HEK293 (cell line): ENCODE measurements at regions of chrX and their contacts with region 1.

Region 1: GRCh38 chrX:47836164-47837072 is at the start of gene ZNF81:
- H3K4me3 ChIP-seq: peak within 1 kb of the TSS; percentile 69
- H3K27ac ChIP-seq: no peak within 1 kb of the TSS
- H3K4me1 ChIP-seq: no peaks in the 10 kb centered on the region
- CTCF ChIP-seq: no peak

Region 2: DNA sequence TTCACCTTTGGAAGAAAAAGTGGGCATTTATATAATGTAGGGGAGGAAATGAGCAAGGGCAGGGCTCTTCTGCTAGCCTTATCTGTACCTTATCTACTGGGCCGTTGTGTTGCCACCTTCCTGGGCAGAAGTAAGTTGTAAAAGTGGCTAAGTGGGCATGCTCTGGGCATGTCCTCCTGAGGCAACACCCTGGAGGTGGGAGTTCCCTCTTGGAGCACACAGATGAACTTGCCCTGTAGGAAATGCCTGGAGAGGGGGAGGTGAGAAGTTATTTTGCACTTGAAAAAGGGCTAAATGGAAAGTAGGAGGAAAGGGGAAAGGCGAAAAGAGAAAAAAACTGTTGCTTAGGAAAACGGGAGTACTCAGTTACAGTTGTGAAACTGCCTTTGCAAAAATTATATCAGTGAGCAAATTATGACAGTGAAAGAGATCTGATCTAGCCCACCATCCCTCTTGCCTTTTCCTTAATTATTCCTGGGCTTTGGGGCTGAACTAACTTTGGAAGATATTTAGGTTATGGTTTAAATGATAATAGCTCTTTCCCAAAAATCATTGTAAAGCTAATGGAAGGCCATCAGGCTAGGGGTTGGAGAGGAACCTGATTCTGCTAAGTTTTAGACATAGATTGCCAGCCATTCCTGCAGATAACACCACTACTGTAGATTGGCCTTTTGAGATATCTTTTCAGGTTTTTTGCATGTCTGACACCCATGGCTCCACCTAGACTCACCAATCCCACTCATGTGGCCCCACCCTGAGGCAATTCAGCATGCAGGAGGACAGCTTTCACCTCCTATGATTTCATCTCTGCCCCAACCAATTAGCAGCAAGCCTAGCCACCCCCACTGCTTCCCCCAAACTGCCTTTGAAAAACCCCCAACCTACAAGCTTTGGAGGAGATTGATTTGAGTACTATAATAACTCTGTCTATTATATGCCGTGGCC is 20.2 kb before region 1 on chrX:
- CTCF ChIA-PET with region 1: interaction called, 16 read pairs
- POLR2A ChIA-PET with region 1: no interaction called
- H3K4me3 ChIP-seq: no peak overlapping the region
- H3K27ac ChIP-seq: no peak overlapping the region
- H3K4me1 ChIP-seq: no peaks in the 10 kb centered on the region
- CTCF ChIP-seq: no peak

Region 3: GRCh38 chrX:47863187-47863586 is 26.8 kb after region 1 on chrX:
- CTCF ChIA-PET with region 1: no interaction called
- POLR2A ChIA-PET with region 1: no interaction called
- H3K4me3 ChIP-seq: no peak overlapping the region
- H3K27ac ChIP-seq: no peak overlapping the region
- H3K4me1 ChIP-seq: no peaks in the 10 kb centered on the region
- CTCF ChIP-seq: no peak